ENCODE measurements at regions of chr6 and their contacts with region 1.

Region 1: DNA sequence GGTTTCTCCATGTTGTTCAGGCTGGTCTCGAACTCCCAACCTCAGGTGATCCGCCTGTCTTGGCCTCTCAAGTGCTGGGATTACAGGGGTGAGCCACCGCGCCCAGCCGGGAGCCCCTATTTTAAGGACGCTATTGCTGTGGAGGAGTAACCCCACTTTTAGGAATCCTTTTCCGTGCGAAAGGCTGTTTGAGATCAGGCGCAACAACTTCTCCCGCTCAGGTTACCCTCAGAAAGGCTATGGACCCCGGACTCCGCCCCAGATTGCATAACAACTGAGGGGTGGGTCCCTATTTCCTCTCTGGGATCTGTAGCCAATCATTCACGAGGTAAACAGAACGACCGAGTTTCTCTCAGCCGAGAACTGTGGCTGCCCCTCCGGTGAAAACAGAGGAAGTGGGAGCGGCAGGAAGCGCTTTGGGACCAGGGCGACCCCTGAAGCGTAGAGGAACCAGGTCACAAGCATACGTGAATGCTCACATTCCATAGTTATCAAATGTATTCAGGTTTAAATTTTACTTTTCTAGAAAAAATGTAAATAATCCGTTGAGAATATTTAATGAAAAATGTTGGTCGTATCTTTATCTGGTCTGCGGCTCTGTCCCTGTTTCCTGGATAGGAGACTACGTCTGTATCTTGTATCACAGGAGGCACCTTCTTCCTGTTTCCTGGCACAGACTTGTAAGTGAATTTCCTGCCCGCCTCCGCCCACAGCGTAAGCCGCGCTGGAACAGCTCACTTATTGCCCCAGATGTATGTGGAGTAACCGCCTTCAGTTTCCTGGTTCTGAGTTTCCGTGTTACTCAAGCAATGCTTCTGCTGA is 26.8 kb downstream of the HLA-E start:
- DNase-seq: peak; percentile 46
- ATAC-seq: peak; percentile 95
- H3K4me3 ChIP-seq: peak overlapping the region; percentile 62 to 67
- H3K27ac ChIP-seq: peak overlapping the region; percentile 89
- H3K4me1 ChIP-seq: no peaks in the 10 kb centered on the region
- H3K27me3 ChIP-seq: no peaks in the 10 kb centered on the region
- CTCF ChIP-seq: no peak

Region 2: DNA sequence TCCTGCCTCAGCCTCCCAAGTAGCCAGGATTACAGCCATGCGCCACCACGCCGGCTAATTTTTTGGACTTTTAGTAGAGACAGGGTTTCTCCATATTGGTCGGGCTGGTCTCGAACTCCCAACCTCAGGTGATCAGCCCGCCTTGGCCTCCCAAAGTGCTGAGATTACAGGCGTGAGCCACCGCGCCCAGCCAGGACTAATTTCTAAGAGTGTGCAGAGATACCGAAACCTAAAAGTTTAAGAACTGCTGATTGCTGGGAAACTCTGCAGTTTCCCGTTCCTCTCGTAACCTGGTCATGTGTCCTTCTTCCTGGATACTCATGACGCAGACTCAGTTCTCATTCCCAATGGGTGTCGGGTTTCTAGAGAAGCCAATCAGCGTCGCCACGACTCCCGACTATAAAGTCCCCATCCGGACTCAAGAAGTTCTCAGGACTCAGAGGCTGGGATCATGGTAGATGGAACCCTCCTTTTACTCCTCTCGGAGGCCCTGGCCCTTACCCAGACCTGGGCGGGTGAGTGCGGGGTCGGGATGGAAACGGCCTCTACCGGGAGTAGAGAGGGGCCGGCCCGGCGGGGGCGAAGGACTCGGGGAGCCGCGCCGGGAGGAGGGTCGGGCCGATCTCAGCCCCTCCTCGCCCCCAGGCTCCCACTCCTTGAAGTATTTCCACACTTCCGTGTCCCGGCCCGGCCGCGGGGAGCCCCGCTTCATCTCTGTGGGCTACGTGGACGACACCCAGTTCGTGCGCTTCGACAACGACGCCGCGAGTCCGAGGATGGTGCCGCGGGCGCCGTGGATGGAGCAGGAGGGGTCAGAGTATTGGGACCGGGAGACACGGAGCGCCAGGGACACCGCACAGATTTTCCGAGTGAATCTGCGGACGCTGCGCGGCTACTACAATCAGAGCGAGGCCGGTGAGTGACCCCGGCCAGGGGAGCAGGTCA is 26.8 kb before region 1 on chr6 and contains the start of gene HLA-E:
- CTCF ChIA-PET with region 1: interaction called, 3 read pairs
- POLR2A ChIA-PET with region 1: interaction called, 11 read pairs
- in situ Hi-C with region 1: no loop called
- intact Hi-C with region 1: no loop called
- DNase-seq: peak; percentile 92
- ATAC-seq: peak; percentile 96
- H3K4me3 ChIP-seq: peak within 1 kb of the TSS; percentile 80 to 96
- H3K27ac ChIP-seq: peak within 1 kb of the TSS; percentile 86
- H3K4me1 ChIP-seq: peaks cover 7% of the 10 kb centered on the region
- H3K27me3 ChIP-seq: no peaks in the 10 kb centered on the region
- CTCF ChIP-seq: no peak
- total RNA-seq, gene HLA-E: 132 TPM

Region 3: GRCh38 chr6:30533460-30534294 is 17.5 kb after region 1 on chr6:
- CTCF ChIA-PET with region 1: interaction called, 10 read pairs
- POLR2A ChIA-PET with region 1: no interaction called
- in situ Hi-C with region 1: no loop called
- intact Hi-C with region 1: no loop called
- DNase-seq: no peak
- ATAC-seq: no peak
- H3K4me3 ChIP-seq: peak overlapping the region in 1 of 2 experiments; percentile 16; a peak in 1 of 4 replicates
- H3K27ac ChIP-seq: no peak overlapping the region
- H3K4me1 ChIP-seq: no peaks in the 10 kb centered on the region
- H3K27me3 ChIP-seq: no peaks in the 10 kb centered on the region
- CTCF ChIP-seq: no peak

Region 4: GRCh38 chr6:30707281-30707872 is 191.2 kb after region 1 on chr6:
- CTCF ChIA-PET with region 1: no interaction called
- POLR2A ChIA-PET with region 1: no interaction called
- in situ Hi-C with region 1: no loop called
- intact Hi-C with region 1: no loop called
- DNase-seq: no peak
- ATAC-seq: peak; percentile 44
- H3K4me3 ChIP-seq: no peak overlapping the region
- H3K27ac ChIP-seq: peak overlapping the region; percentile 44; the same call in 1 of the 2 replicates
- H3K4me1 ChIP-seq: peaks cover 11% of the 10 kb centered on the region
- H3K27me3 ChIP-seq: no peaks in the 10 kb centered on the region
- CTCF ChIP-seq: no peak

Region 5: GRCh38 chr6:30781743-30782424 is 265.7 kb after region 1 on chr6:
- CTCF ChIA-PET with region 1: no interaction called
- POLR2A ChIA-PET with region 1: interaction called, 13 read pairs
- in situ Hi-C with region 1: no loop called
- intact Hi-C with region 1: no loop called
- DNase-seq: peak; percentile 98
- ATAC-seq: peak; percentile 78
- H3K4me3 ChIP-seq: peak overlapping the region in 1 of 2 experiments; percentile 24; a peak in 2 of 4 replicates
- H3K27ac ChIP-seq: peak overlapping the region; percentile 90
- H3K4me1 ChIP-seq: peaks cover 62% of the 10 kb centered on the region
- H3K27me3 ChIP-seq: no peaks in the 10 kb centered on the region
- CTCF ChIP-seq: no peak